Psoas muscle (tissue), 8 donors: ENCODE measurements at regions of chr17 and their contacts with region 1.

Region 1: DNA sequence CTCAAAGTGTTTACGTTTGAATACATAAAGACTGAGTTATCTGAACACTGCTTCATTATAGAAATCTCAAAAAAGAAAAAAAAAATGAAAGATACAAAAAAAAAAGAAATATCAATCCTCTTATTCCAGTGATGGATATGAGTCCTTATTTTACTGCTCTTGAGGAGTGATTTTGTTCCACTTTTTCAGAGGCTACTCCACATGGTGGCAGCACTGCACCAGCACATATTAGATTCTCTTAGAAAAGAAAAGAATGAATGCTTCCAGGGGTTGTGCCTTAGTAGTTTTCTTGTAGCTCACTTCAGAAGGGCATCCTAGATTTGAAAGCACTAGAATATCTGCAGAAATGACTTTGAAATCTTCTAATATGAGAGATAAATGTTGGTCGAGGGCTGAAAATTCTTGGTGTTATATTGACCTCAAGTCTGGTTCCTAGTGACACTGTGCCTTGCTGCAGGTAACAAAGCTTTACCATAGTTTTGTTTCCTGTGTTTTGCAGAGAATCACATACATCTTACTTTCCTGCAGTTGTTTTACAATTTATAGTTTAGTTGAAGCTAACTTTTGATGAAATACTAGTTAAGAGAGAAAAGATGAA is 25.9 kb downstream of the AP2B1 start:
- DNase-seq: peak in 1 of 2 donors; percentile 27
- ATAC-seq: peak in 2 of 4 donors; percentile 45 to 49
- H3K4me3 ChIP-seq: no peak overlapping the region
- H3K27ac ChIP-seq: no peak overlapping the region
- H3K4me1 ChIP-seq: peaks cover 33% of the 10 kb centered on the region
- H3K27me3 ChIP-seq: no peaks in the 10 kb centered on the region
- CTCF ChIP-seq: peak; percentile 69

Region 2: GRCh38 chr17:35655303-35655702 is 42.3 kb after region 1 on chr17:
- intact Hi-C with region 1: loop called in 1 of 2 experiments (anchors 5 kb)
- DNase-seq: no peak
- ATAC-seq: no peak
- H3K4me3 ChIP-seq: no peak overlapping the region
- H3K27ac ChIP-seq: no peak overlapping the region
- H3K4me1 ChIP-seq: peaks cover 10% of the 10 kb centered on the region
- H3K27me3 ChIP-seq: no peaks in the 10 kb centered on the region
- CTCF ChIP-seq: no peak

Region 3: GRCh38 chr17:35740997-35741931 is 128.2 kb after region 1 on chr17:
- intact Hi-C with region 1: loop called in 1 of 2 experiments (anchors 2 kb)
- DNase-seq: no peak
- ATAC-seq: peak; percentile 60 to 86 (median 70)
- H3K4me3 ChIP-seq: peak overlapping the region; percentile 57
- H3K27ac ChIP-seq: no peak overlapping the region
- H3K4me1 ChIP-seq: peaks cover 13% of the 10 kb centered on the region
- H3K27me3 ChIP-seq: peaks cover 0 to 7% (median 0%) of the 10 kb centered on the region in 3 donors
- CTCF ChIP-seq: no peak